Esophagus muscularis mucosa (tissue), 4 donors: ENCODE measurements at regions of chr20 and their contacts with region 1.

Region 1: GRCh38 chr20:49610701-49611538 is 43.0 kb upstream of the PTGIS start:
- DNase-seq: no peak
- H3K4me3 ChIP-seq: peak overlapping the region; percentile 13 to 36 (median 30)
- H3K27ac ChIP-seq: no peak overlapping the region
- H3K4me1 ChIP-seq: peaks cover 12 to 22% (median 16%) of the 10 kb centered on the region in 4 donors
- H3K27me3 ChIP-seq: peaks cover 0 to 16% (median 0%) of the 10 kb centered on the region in 4 donors
- CTCF ChIP-seq: peak in 2 of 3 experiments; percentile 98 to 99
- EP300 ChIP-seq: no peak
- POLR2A ChIP-seq: no peak

Region 2: GRCh38 chr20:49338061-49338460 is 272.9 kb before region 1 on chr20:
- intact Hi-C with region 1: loop called (anchors 10 kb)
- DNase-seq: no peak
- H3K4me3 ChIP-seq: no peak overlapping the region
- H3K27ac ChIP-seq: no peak overlapping the region
- H3K4me1 ChIP-seq: peaks cover 0 to 37% (median 22%) of the 10 kb centered on the region in 4 donors
- H3K27me3 ChIP-seq: no peaks in the 10 kb centered on the region
- CTCF ChIP-seq: no peak
- EP300 ChIP-seq: no peak
- POLR2A ChIP-seq: no peak

Region 3: DNA sequence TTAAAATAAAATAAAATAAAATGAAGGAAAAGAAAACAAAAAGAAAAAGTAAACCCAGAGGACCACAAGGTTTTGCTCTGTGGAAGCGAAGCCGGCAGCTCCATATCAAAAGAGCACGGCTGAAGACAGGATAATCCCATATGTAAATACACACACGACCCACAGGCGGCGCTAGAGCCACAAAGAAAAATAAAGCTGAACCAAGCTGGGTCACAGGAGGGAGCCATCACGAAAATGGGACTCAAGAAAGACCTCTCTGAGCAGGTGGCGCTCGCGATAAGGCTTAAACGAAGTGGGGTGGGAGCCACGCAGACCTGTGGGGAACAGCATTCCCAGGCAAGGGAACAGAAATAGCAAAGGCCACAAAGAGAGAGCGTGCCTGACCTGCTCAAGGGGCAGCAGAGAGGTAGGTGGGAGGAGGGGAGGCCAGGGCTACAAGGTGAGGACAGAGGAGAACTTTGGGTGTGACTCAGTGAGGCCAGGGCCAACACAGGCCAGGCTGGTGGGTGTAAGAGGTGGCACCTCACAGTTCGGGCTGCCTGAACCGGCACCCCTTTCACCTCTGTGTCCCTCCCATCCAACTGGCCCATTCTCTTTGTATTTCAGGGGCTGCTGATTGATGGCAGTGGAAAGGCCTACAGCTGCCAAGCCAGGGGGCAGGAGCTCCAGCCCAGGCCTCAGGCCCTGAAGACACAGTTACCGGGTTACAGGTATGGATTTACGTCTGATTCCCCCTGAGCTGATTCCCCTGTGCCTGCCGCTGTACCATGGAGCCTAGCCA is 69.0 kb before region 1 on chr20:
- intact Hi-C with region 1: loop called (anchors 2 kb)
- DNase-seq: peak; percentile 94
- H3K4me3 ChIP-seq: no peak overlapping the region
- H3K27ac ChIP-seq: peak overlapping the region in 3 of 4 donors; percentile 16 to 40 (median 32)
- H3K4me1 ChIP-seq: peaks cover 0 to 9% (median 3%) of the 10 kb centered on the region in 4 donors
- H3K27me3 ChIP-seq: no peaks in the 10 kb centered on the region
- CTCF ChIP-seq: peak; percentile 79 to 94 (median 82)
- EP300 ChIP-seq: no peak
- POLR2A ChIP-seq: no peak

Region 4: DNA sequence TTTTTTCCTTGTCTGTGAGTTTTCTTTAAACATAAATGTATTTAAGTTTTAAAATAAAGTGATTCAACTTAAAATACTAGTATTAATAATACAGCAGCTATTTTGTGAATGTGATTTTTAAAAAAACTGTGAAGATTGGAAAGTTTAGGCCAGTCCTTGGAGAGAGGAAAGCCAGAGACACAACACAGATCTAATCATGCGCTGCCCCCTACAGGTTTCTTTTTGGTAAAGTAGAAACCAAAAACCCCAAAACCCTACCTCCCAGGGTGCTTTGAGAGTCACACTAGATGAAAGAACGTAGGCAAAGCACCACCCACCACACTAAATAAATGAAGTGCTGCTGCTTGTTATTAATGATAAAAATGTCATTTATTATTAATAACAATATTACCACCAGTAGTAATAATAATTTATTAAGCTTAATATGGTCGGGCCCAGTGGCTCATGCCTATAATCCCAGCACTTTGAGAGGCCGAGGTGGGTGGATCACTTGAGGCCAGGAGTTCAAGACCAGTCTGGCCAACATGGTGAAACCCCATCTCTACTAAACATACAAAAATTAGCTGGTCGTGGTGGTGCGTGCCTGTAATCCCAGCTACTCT is 235.4 kb after region 1 on chr20:
- intact Hi-C with region 1: loop called (anchors 1 kb)
- DNase-seq: no peak
- H3K4me3 ChIP-seq: no peak overlapping the region
- H3K27ac ChIP-seq: no peak overlapping the region
- H3K4me1 ChIP-seq: peaks cover 6 to 14% (median 9%) of the 10 kb centered on the region in 4 donors
- H3K27me3 ChIP-seq: no peaks in the 10 kb centered on the region
- CTCF ChIP-seq: peak; percentile 57 to 67 (median 60)
- EP300 ChIP-seq: no peak
- POLR2A ChIP-seq: no peak

Region 5: GRCh38 chr20:49888345-49888966 is 277.5 kb after region 1 on chr20:
- intact Hi-C with region 1: loop called (anchors 2 kb)
- DNase-seq: no peak
- H3K4me3 ChIP-seq: no peak overlapping the region
- H3K27ac ChIP-seq: peak overlapping the region in 3 of 4 donors; percentile 44 to 71 (median 59)
- H3K4me1 ChIP-seq: peaks cover 52 to 63% (median 56%) of the 10 kb centered on the region in 4 donors
- H3K27me3 ChIP-seq: no peaks in the 10 kb centered on the region
- CTCF ChIP-seq: peak; percentile 54 to 76 (median 62)
- EP300 ChIP-seq: no peak
- POLR2A ChIP-seq: no peak